ENCODE measurements at regions of chr5 and their contacts with region 1.

Region 1: DNA sequence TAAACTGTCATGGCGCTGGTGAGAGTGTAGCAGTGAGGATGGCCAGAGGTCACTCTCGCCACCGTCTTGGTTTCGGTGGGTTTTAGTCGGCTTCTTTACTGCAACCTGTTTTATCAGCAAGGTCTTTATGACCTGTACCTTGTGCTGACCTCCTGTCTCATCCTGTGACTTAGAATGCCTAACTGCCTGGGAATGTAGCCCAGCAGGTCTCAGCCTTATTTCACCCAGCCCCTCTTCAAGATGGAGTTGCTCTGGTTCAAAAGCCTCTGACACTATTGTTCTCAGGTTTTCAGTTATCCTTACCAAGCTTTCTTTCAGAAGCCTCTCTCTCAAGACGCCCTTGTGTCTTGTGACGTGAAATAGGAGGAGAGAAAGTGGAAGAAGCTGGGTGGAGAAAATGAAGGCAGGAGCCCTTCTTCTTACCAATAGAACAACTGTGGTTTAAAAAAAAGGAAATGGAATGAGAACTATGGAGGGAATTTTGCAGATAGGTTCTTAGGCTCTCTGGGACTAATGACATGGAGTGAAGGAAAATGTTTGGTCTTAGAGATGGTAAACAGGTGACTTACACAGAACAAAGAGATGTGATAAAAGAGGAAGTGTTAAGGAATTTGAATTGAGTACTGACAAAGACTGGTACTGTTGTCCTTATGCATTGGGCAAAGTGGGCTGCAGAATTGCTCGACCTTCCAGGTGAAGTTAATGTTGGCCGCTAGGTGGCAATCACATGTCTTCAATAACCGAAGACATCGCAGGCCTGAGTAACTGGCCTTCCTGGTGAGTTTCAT is 133.3 kb upstream of the RAI14 start:
- H3K4me3 ChIP-seq: no peak overlapping the region
- H3K27ac ChIP-seq: no peak overlapping the region
- H3K4me1 ChIP-seq: no peaks in the 10 kb centered on the region
- CTCF ChIP-seq: peak; percentile 90

Region 2: GRCh38 chr5:34511915-34512314 is 10.9 kb before region 1 on chr5:
- CTCF ChIA-PET with region 1: interaction called, 15 read pairs
- POLR2A ChIA-PET with region 1: no interaction called
- H3K4me3 ChIP-seq: no peak overlapping the region
- H3K27ac ChIP-seq: no peak overlapping the region
- H3K4me1 ChIP-seq: peaks cover 13% of the 10 kb centered on the region
- CTCF ChIP-seq: no peak

Region 3: DNA sequence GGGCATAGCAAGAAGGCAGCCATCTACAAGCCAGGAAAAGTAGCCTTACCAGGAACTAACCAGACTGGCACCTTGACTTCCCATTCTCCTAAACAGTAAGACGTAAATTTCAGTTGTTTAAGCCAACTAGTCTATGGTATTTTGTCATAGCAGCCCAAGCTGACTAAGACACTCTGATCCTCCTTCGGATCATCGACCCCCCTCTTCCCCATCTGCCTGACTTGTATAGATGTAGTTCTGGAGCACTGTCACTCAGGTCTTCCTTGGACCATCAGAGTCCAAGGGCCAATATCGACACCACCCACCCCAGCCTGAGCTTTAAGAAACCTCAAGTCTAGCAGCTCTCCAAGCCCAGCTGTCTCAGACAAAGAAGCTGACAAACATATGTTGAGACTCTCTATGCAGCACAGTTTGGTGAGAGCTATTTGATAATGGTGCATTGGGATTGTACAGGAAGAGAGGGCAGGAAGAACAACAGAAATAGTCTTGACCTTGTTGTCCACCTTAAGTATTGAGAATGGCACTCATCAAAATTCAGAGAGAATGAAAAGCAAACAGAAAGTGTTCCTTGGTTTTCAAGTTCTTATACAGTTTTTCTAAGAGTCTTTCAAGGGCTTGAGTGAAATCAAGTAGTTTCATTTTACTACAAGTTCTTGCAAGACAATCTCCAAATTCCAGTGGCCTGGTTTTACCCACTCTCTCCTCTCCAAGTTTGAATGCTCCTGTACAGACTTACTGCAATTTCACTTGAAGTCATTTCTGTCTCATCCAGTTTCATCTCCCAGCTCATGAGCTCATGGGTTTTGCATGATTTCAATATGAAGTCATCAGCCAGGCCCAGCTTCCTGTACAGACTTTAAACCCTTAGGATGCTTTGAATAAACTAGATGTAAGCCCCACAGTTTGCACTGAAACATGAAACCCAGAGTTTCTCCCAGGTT is 11.1 kb after region 1 on chr5:
- CTCF ChIA-PET with region 1: interaction called, 10 read pairs
- POLR2A ChIA-PET with region 1: no interaction called
- H3K4me3 ChIP-seq: no peak overlapping the region
- H3K27ac ChIP-seq: no peak overlapping the region
- H3K4me1 ChIP-seq: no peaks in the 10 kb centered on the region; the same call in 1 of the 2 replicates
- CTCF ChIP-seq: no peak

Region 4: DNA sequence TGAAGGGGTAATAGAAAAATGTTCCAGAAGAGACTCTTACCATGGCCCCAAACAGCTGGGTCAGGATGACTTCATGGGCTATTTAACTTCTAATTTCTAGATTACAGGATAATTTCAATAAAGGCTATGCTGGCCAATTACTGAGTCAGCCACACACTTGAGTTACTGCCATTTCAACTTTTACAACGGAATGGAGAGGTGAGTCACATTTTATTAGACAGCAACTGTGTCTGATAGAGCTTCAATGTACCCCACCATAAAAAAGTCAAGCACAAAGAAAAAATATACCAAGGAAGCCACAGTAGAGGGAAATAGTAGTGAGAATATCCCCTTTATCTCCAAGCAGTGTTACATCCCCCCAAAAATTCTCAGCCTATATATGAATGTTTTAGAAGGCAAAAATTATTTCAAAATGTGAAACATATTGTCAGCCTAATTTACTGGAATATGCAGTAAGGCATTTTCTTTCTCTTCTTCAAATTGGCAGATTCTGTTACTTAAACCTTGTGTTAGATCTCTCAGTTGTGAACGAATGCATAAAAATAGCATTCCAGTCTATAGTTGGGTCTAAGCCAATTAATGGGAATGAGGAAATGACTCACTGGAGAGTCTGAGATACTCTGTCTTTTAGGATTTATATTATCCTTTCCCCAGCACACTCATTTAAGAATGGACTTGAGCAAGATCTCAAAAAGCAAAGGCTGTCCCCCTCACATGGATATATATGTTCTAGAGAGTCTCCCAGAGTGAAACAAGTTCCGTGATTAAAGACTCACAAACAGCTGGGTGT is 86.3 kb after region 1 on chr5:
- CTCF ChIA-PET with region 1: interaction called, 10 read pairs
- POLR2A ChIA-PET with region 1: no interaction called
- H3K4me3 ChIP-seq: no peak overlapping the region
- H3K27ac ChIP-seq: peak overlapping the region; percentile 58
- H3K4me1 ChIP-seq: peaks cover 26% of the 10 kb centered on the region
- CTCF ChIP-seq: no peak

Region 5: GRCh38 chr5:34876275-34876674 is 353.5 kb after region 1 on chr5:
- CTCF ChIA-PET with region 1: no interaction called
- POLR2A ChIA-PET with region 1: no interaction called
- H3K4me3 ChIP-seq: no peak overlapping the region
- H3K27ac ChIP-seq: no peak overlapping the region
- H3K4me1 ChIP-seq: no peaks in the 10 kb centered on the region
- CTCF ChIP-seq: no peak

Measured in HEK293 (cell line).